Transverse colon (tissue), 4 donors: ENCODE measurements at regions of chr11 and their contacts with region 1.

Region 1: DNA sequence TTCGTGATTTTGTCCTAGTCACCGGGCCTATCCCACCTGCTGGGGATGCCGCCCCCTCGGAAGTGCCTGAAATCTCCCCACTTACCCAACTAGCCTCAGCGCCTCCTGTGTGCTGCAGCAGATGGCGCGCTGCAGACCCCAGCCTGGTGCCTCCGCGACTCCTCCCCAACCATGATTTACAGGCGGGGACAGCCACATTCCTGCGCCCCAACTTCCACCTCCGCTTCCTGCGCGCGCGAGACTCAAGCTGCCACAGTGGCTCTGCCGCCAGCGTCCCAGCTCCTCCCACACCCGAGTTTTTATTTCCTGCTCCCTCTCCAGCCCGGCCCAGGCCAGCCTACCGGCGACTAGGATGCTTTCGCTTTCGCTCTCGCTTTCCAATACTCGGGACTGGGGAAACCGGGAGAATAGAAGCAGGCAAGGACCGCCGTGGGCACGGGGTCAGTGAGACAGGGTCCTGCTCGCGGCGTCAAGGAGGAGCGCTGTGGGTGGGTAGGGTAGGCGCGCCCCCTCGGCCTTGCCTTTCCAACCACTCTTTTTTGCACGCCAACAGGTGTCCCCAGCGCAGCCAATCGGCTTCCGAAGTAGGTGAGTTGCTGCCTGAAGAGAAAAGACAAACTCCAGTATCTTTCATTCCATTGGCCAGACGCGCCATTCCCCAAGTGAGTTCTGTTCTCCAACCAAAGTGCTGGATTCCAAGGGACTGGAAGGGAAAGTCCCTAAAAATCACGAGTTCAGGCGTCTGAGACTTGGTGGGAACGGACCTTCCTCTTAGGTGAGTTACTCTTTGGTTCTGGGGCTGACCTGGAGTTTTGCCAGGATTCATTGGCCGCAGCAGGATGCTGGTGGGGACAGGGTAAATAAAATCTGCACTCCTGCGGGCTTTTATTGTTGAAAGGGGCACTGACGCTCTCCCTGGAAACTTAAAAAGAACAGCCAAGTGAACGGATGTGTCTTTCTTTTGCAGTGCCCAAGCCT is at the start of gene FAM111A:
- DNase-seq: peak; percentile 93
- H3K4me3 ChIP-seq: peak within 1 kb of the TSS; percentile 42 to 77 (median 64)
- H3K27ac ChIP-seq: peak within 1 kb of the TSS; percentile 91 to 95 (median 94)
- H3K4me1 ChIP-seq: peaks cover 0 to 44% (median 22%) of the 10 kb centered on the region in 4 donors
- H3K27me3 ChIP-seq: no peaks in the 10 kb centered on the region
- CTCF ChIP-seq: peak in 1 of 5 experiments; percentile 35
- EP300 ChIP-seq: no peak
- POLR2A ChIP-seq: peak; percentile 66
- total RNA-seq, gene FAM111A: 17.6 to 62.1 (median 26.2) TPM

Region 2: DNA sequence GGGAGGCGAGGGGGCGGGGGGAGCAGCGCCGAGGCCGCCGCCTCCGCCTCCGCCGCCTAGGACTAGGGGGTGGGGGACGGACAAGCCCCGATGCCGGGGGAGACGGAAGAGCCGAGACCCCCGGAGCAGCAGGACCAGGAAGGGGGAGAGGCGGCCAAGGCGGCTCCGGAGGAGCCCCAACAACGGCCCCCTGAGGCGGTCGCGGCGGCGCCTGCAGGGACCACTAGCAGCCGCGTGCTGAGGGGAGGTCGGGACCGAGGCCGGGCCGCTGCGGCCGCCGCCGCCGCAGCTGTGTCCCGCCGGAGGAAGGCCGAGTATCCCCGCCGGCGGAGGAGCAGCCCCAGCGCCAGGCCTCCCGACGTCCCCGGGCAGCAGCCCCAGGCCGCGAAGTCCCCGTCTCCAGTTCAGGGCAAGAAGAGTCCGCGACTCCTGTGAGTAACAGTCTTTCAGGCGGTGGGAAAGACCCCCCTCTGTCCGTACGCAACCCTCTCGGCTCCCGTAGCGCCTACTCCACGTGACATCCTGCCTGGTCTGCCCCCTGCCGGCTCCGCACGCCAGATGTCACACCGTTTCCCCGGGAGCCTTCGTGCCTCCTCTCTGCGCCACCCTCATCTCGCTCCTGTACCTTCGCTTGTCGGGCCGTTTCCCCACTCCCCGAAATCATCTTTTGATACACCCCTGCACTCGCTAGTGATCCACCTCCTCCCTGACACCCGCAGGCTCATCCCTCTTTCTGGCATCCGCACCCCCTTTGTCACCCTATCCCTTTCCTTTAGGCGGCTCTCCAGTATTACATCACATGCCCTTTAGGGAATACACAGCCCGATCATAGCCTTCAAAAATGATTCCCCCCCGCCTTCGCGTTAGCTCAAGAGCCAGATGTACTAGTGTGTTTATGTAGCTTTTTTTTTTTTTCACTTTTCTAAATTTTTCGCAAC is 563.4 kb before region 1 on chr11:
- in situ Hi-C with region 1: loop called in 1 of 4 experiments (anchors 10 kb)
- intact Hi-C with region 1: no loop called
- DNase-seq: peak; percentile 94
- H3K4me3 ChIP-seq: peak overlapping the region; percentile 98 to 100 (median 98)
- H3K27ac ChIP-seq: peak overlapping the region; percentile 100
- H3K4me1 ChIP-seq: peaks cover 32 to 73% (median 49%) of the 10 kb centered on the region in 4 donors
- H3K27me3 ChIP-seq: no peaks in the 10 kb centered on the region
- CTCF ChIP-seq: peak; percentile 68 to 98 (median 85)
- EP300 ChIP-seq: no peak
- POLR2A ChIP-seq: peak; percentile 82

Region 3: DNA sequence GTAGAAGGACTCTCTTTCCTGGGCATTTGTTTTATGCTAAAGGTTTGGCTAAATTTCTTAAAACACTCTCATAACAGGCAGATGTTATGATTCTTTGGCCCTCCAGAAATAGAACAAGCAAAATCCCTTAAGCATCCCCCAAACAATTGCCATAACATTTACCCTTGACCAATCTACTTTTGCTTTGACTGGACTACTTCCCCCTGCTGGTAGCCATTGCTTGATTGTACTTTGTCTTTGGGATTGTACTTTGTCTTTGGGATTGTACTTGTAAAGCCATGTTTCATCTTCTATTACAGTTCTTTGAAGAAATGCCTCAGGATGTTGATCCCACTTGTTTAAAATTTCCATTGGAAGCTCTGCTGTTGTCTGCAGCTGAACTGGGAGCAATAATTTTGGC is 357.8 kb before region 1 on chr11:
- in situ Hi-C with region 1: no loop called
- intact Hi-C with region 1: no loop called
- DNase-seq: no peak
- H3K4me3 ChIP-seq: no peak overlapping the region
- H3K27ac ChIP-seq: no peak overlapping the region
- H3K4me1 ChIP-seq: no peaks in the 10 kb centered on the region
- H3K27me3 ChIP-seq: no peaks in the 10 kb centered on the region
- CTCF ChIP-seq: no peak
- EP300 ChIP-seq: no peak
- POLR2A ChIP-seq: no peak

Region 4: DNA sequence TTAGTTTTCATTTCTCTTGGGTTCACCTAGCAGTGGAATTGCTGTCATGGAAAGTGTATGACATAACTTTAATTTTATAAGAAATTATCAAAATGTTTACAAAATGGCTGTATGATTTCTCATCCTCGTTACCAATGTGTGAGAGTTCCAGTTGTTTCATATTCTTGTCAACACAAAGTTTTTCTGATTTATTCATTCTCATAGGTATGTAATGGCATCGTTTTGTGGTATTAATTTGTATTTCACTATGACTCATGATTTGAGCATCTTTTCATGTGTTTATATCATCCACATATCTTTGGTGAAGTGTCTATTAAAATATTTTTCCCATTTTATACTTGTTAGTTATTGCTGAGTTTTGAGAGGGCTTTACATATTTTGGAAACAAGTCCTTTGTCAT is 30.3 kb before region 1 on chr11:
- in situ Hi-C with region 1: no loop called
- intact Hi-C with region 1: no loop called
- DNase-seq: no peak
- H3K4me3 ChIP-seq: no peak overlapping the region
- H3K27ac ChIP-seq: no peak overlapping the region
- H3K4me1 ChIP-seq: peaks cover 0 to 10% (median under 1%) of the 10 kb centered on the region in 4 donors
- H3K27me3 ChIP-seq: no peaks in the 10 kb centered on the region
- CTCF ChIP-seq: no peak
- EP300 ChIP-seq: no peak
- POLR2A ChIP-seq: no peak

Region 5: DNA sequence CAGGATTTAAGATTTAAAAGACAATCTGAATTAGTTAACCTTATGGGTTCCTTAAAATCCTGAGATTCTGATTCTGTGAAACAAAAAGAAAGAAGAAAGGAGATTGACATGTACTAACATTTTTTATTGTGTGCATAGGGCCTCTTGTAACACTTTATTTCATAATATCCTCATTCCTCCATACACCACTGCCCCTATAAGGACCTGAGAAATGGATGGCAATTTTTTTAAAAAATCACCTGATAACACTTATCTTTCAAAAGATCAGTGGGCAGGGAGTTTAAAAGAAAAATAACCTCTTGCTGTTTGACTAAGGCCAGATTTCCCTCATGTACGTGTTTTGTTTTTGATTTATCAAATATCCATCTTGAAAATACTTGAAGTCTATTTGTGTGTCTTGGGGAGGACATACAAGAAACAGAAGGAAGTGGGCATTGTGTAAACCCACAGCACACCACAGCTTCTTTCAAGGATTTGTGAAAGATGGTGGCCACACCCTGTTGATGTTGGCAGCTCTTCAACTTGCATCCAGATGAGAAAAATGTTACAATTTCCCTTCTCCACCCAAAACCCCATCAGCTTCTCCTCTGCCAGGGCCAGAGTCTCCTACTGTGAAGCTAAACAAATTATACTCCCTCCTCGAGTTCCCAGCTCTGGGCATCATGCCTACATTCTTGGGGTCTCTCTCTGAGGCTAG is 104.9 kb after region 1 on chr11:
- in situ Hi-C with region 1: no loop called
- intact Hi-C with region 1: no loop called
- DNase-seq: no peak
- H3K4me3 ChIP-seq: no peak overlapping the region
- H3K27ac ChIP-seq: no peak overlapping the region
- H3K4me1 ChIP-seq: peaks cover 0 to 8% (median 0%) of the 10 kb centered on the region in 4 donors
- H3K27me3 ChIP-seq: no peaks in the 10 kb centered on the region
- CTCF ChIP-seq: no peak
- EP300 ChIP-seq: no peak
- POLR2A ChIP-seq: no peak